ENCODE measurements at regions of chr1 and their contacts with region 1.

Region 1: GRCh38 chr1:17494114-17494729 is 45.3 kb upstream of the ARHGEF10L start:
- DNase-seq: peak; percentile 83
- ATAC-seq: peak; percentile 72

Region 2: DNA sequence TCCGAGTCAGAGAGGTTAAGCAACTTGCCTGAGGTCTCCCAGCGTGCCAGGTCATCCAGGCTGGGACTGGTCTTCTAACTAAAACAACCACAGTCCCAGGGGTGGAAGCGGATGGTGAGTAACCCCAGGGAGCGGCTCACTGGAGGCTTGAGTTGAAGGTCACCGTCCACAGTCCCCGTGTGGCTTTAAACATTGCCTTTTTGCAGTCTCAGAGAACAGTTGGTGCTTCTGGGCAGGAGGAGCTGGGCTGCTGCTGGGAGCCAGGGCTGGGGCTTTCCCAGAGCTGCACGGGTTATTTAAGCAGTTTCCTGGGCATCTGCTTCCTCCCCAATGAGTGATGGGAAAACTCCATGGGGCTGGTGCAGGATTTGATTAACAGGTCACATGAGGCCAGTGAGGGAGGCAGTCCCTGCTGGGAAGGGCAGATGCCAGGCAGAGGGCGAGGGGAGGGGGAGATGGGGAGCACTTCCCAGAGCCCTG is 57.6 kb after region 1 on chr1:
- intact Hi-C with region 1: no loop called
- DNase-seq: no peak
- ATAC-seq: peak; percentile 78

Region 3: DNA sequence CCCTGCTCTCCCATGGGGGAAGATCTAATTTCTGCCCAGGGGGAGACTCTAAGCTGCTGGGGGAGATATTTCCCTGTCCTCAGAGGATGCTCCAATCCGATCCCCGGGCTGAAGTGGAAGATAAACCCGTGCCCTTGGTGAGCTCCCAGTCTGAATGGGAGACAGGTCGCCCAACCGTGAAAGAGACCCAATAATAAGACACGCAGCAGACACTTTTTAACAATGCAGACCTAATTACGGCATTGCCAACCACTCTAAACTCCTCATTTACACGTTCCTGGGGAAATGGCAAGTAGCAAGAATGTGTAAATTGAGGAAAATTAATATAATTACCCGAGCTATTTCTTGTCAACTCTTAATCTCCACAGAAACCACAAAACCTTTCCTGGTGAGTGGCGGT is 212.2 kb after region 1 on chr1:
- intact Hi-C with region 1: no loop called
- DNase-seq: peak; percentile 7
- ATAC-seq: no peak

Region 4: DNA sequence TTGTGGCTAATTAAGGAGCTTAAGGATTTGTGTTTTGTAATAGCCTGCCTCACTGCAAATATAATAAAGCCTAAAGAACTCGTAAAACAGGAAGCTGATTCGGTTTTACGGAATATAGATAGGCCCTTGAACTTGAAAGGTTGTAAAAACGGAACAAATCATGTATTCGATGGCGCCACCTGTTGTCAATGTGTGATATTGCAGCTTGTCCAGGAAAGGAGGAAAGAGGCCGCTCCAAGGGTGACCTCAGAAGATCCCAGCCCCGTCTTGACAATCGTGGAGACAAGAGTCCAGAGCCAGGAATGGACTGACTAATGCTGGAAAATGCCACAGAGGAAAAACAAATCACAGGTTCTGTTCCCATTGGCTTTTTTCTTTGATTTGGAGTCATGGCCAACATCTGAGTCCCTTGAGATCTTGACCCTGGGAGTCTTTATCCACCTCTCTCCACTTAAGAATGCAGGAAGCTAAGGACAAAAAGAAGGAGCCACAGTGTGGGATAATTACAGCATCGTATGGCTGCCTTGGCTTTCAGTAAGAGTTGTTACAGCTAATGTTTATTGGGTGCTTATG is 606.4 kb after region 1 on chr1:
- intact Hi-C with region 1: loop called (anchors 5 kb)
- DNase-seq: no peak
- ATAC-seq: peak; percentile 59

Region 5: GRCh38 chr1:18575620-18576019 is 1081.4 kb after region 1 on chr1:
- intact Hi-C with region 1: loop called (anchors 10 kb)
- DNase-seq: no peak
- ATAC-seq: no peak